ENCODE measurements at regions of chr10 and their contacts with region 1.

Region 1: GRCh38 chr10:117741524-117741923 is 199.0 kb downstream of the EMX2 start:
- DNase-seq: no peak
- H3K4me3 ChIP-seq: no peak overlapping the region
- H3K27ac ChIP-seq: no peak overlapping the region
- H3K4me1 ChIP-seq: no peaks in the 10 kb centered on the region; a peak in 1 of 7 replicates
- H3K27me3 ChIP-seq: peaks cover 0 to 7% (median 3%) of the 10 kb centered on the region in 4 experiments; a peak in 5 of 7 replicates
- CTCF ChIP-seq: peak; percentile 9 to 43 (median 39); a peak in 3 of 4 replicates
- EP300 ChIP-seq: no peak
- POLR2A ChIP-seq: no peak
- RAD21 ChIP-seq: peak; percentile 5 to 19; a peak in 1 of 4 replicates

Region 2: DNA sequence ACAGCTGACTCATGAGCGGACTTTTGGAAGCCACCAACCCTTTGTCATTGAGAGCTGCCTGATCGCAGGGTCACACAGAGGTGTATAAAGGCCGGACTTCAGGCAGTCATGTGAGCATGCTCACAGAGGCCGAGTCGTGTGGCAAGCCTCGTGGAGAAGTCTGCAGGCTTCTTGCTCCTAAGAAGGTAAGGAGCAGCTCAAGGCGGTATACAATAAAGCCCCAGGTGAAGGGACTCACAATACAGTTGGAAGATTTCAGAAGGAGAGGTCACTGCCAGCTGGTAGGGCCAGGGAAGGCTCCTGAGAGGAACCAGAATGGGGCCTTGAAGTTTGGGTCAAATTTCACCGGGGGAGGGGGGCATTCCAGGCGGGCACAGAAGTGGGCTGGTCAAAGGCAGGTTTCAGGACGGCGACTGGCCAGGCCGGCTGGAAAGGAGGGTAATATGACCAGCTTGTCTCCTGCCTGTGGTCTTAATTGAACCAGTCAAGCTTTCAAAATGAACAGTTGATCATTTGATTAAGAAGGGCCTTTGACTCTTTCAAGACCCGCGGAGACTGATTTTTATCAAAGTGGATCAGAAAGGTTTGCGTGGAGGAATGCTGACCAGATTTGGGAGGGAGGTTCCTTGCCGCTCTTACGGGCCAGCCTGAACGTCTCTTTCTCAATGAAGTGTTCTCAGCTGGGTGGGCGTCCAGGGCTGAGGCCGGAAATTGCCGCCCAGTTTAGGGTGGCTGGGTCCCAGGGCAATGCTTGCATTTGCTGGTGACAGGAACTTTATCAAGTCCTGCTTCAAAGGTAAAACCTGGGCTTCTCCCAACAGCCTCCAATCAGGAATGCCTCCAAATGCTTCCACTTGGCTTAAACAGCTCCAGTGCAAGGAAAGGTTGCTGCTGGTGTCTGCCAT is 20.3 kb before region 1 on chr10:
- CTCF ChIA-PET with region 1: interaction called, 16 read pairs
- POLR2A ChIA-PET with region 1: interaction called, 3 read pairs
- DNase-seq: peak in 1 of 2 experiments; percentile 72
- H3K4me3 ChIP-seq: peak overlapping the region in 1 of 4 experiments; percentile 8; a peak in 1 of 8 replicates
- H3K27ac ChIP-seq: no peak overlapping the region
- H3K4me1 ChIP-seq: peaks cover 6 to 11% (median 8%) of the 10 kb centered on the region in 4 experiments
- H3K27me3 ChIP-seq: peaks cover 0 to 1% (median 0%) of the 10 kb centered on the region in 4 experiments; a peak in 1 of 7 replicates
- CTCF ChIP-seq: no peak
- EP300 ChIP-seq: no peak
- POLR2A ChIP-seq: no peak
- RAD21 ChIP-seq: no peak

Region 3: DNA sequence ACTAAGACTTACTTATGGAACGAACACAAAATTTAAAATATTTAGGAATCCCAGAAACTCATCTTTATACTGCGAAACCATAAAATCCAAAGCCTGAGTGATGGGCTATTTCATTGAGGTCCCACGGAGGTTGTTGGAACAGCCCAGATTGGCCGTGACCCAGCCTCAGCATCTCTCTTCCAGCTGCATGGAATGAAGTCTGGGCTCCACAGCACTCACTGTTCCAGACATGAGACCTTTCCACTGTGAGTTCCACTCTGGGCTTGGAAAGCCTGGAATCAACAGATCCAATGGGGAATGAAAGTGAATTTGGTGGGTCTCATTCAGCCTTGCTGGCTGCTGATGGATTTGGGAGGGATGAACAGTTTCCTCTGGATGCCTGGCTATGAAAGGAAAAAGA is 14.1 kb before region 1 on chr10:
- CTCF ChIA-PET with region 1: interaction called, 16 read pairs
- POLR2A ChIA-PET with region 1: no interaction called
- DNase-seq: no peak
- H3K4me3 ChIP-seq: no peak overlapping the region
- H3K27ac ChIP-seq: no peak overlapping the region
- H3K4me1 ChIP-seq: peaks cover 0 to 9% (median 3%) of the 10 kb centered on the region in 4 experiments; a peak in 2 of 7 replicates
- H3K27me3 ChIP-seq: peaks cover 0 to 1% (median 0%) of the 10 kb centered on the region in 4 experiments; a peak in 1 of 7 replicates
- CTCF ChIP-seq: no peak
- EP300 ChIP-seq: no peak
- POLR2A ChIP-seq: no peak
- RAD21 ChIP-seq: no peak

Region 4: DNA sequence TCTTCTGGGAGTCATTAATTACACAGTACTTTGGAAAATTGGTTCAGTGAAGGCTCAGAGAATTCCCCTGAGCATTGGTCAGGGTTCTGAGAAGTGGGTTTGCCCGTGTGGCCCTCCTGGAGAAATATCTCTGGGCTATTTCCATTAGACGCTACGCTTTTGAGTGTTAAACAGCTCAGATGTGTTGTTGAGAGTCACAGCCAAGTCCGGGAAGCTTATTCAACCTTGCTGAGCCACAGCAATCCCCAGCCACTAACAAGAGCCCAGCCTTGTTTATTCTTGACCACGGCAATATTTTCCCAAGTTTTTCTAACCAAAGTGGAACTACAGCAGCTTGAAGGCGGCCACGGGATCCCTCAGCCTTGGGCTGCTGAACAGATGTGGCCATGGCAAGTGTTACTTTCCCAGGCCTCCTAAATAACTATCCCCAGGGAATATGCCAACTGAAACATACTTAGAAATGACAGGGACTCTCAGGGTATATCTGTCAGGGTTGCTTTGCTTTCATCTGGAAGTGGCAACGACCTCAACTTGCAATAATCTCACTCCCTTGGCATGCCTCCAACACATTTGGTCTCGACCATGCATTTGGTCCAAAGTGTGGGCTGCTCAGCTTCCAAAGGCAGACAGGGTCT is 15.7 kb after region 1 on chr10:
- CTCF ChIA-PET with region 1: interaction called, 10 read pairs
- POLR2A ChIA-PET with region 1: interaction called, 3 read pairs
- DNase-seq: no peak
- H3K4me3 ChIP-seq: no peak overlapping the region
- H3K27ac ChIP-seq: no peak overlapping the region
- H3K4me1 ChIP-seq: peaks cover 0 to 5% (median 0%) of the 10 kb centered on the region in 4 experiments; a peak in 1 of 7 replicates
- H3K27me3 ChIP-seq: no peaks in the 10 kb centered on the region
- CTCF ChIP-seq: no peak
- EP300 ChIP-seq: no peak
- POLR2A ChIP-seq: no peak
- RAD21 ChIP-seq: no peak

Measured in H1 (cell line).